CD8-positive, alpha-beta T cell (primary cell): ENCODE measurements at regions of chr10 and their contacts with region 1.

Region 1: DNA sequence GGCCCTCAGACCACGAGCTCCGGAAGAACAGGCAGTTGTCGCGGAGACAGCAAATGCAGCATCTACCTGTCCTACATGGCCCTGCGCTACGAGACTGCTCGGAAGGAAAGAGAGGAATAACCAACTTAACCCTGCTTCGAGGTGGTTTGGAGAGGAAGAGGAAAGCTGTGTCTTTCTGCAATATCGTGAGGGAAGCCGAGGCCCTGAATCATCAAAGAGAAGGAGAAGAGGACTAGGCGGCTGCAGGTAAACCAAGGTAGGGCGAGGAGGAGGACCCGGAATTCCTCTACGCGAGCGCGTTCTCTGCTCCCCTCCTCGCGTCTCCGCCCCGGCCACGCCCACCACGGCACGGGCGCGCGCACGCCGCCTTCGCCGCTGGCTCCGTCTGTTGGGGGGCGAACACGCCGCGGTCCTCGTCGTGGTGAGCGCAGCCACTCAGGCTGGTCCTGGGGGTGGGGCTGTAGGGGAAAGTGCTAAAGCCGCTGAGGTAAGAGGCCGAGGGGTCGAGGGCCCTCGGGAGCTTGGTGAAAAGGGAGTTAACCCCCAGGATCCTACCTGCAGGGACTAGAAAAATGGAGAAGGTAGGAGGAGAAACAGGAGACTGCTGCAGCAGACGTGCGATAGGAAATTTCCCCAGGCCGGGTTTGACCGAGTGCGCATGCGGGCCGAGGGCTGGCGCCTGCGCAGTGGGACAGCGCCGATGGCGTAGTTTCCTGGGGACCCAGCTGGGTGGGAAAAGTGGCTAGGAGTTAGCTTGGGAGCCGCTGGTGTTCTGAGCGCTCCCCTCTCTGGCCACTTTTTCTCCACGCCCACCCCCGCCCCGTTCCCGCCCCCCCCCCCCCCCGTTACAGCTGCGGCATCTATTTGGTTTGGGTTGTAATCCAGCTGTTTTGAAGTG is at the starts of genes ANAPC16 and ASCC1:
- DNase-seq: peak; percentile 90 to 98 (median 95)
- ATAC-seq: peak; percentile 83
- H3K4me3 ChIP-seq: peak within 1 kb of the TSS; percentile 78 to 82
- H3K4me3 Mint-ChIP-seq: peak within 1 kb of the TSS; percentile 100
- H3K27ac ChIP-seq: peak within 1 kb of the TSS; percentile 61 to 93
- H3K27ac Mint-ChIP-seq: peak within 1 kb of the TSS; percentile 100
- H3K4me1 ChIP-seq: peaks cover 58% of the 10 kb centered on the region
- H3K4me1 Mint-ChIP-seq: peaks cover 54% of the 10 kb centered on the region
- H3K27me3 ChIP-seq: no peaks in the 10 kb centered on the region
- H3K27me3 Mint-ChIP-seq: no peaks in the 10 kb centered on the region
- CTCF ChIP-seq: no peak
- total RNA-seq, gene ANAPC16: 46.6 to 48.0 TPM
- total RNA-seq, gene ASCC1: 16.5 to 19.1 TPM

Region 2: GRCh38 chr10:72354478-72355213 is 138.7 kb after region 1 on chr10 and contains the start of gene DNAJB12:
- CTCF ChIA-PET with region 1: no interaction called
- POLR2A ChIA-PET with region 1: no interaction called
- intact Hi-C with region 1: loop called in 1 of 2 experiments (anchors 1 kb)
- DNase-seq: peak; percentile 76 to 95 (median 88)
- ATAC-seq: peak; percentile 82
- H3K4me3 ChIP-seq: peak within 1 kb of the TSS; percentile 96 to 98
- H3K4me3 Mint-ChIP-seq: peak within 1 kb of the TSS; percentile 98
- H3K27ac ChIP-seq: peak within 1 kb of the TSS; percentile 87 to 97
- H3K27ac Mint-ChIP-seq: peak within 1 kb of the TSS; percentile 96
- H3K4me1 ChIP-seq: peaks cover 19% of the 10 kb centered on the region
- H3K4me1 Mint-ChIP-seq: peaks cover 45% of the 10 kb centered on the region
- H3K27me3 ChIP-seq: no peaks in the 10 kb centered on the region
- H3K27me3 Mint-ChIP-seq: no peaks in the 10 kb centered on the region
- CTCF ChIP-seq: no peak
- total RNA-seq, gene DNAJB12: 33.9 to 37.5 TPM

Region 3: DNA sequence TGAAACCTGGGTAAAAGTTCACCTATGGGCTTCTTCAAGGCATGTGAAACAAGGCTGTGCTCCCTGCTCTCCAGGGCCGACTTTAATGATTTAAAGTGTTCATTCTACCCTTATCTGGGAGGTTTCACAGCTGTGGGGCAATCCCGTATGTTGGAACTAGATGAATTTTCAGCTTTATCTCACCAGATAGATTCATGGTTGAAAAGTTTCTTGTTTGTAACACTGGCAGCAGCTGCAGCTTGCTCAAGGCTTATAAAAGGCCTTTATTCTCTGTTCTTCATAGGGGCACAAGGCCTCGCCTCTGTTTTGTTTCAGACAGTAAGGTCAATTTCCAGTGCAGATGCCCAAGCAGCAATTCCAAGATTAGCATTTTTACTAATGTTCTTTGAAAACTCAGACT is 209.2 kb after region 1 on chr10:
- CTCF ChIA-PET with region 1: no interaction called
- POLR2A ChIA-PET with region 1: no interaction called
- intact Hi-C with region 1: no loop called
- DNase-seq: no peak
- ATAC-seq: no peak
- H3K4me3 ChIP-seq: no peak overlapping the region
- H3K4me3 Mint-ChIP-seq: no peak overlapping the region
- H3K27ac ChIP-seq: no peak overlapping the region
- H3K27ac Mint-ChIP-seq: no peak overlapping the region
- H3K4me1 ChIP-seq: no peaks in the 10 kb centered on the region
- H3K4me1 Mint-ChIP-seq: no peaks in the 10 kb centered on the region
- H3K27me3 ChIP-seq: no peaks in the 10 kb centered on the region
- H3K27me3 Mint-ChIP-seq: no peaks in the 10 kb centered on the region
- CTCF ChIP-seq: no peak